Activated CD8-positive, alpha-beta memory T cell treated with anti-CD3 and anti-CD28 coated beads, Interleukin-2, amount 10 ng/mL, durations not matched to agents 7 days and 5 days (primary cell): ENCODE measurements at regions of chr17 and their contacts with region 1.

Region 1: DNA sequence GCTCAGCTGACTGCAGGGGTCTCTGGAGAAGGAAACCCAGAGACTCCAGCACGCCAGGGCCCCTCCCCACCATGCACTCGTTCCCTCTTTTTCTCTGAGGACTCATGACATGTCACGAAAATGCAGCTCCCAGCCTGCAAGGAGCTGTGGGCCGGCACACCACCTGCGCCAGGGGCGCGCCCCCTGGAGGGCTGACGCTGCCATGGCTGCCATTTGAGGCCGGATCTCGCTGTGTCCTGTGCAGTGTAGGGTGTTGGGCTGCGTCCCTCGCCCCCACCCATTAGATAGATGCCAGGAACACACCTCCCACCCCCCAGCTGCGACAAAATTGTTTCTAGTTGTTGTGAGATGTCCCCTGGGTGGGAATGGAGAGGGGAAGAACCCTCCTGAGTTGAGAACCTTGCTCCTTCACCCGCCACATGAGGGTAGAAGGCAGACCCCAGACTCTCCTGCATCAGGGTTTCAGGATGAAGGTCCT is 8.2 kb downstream of the SYNGR2 start:
- DNase-seq: peak; percentile 76
- ATAC-seq: peak; percentile 87
- H3K4me3 Mint-ChIP-seq: no peak overlapping the region
- H3K27ac Mint-ChIP-seq: no peak overlapping the region
- H3K4me1 Mint-ChIP-seq: peaks cover 69% of the 10 kb centered on the region
- H3K27me3 Mint-ChIP-seq: no peaks in the 10 kb centered on the region

Region 2: DNA sequence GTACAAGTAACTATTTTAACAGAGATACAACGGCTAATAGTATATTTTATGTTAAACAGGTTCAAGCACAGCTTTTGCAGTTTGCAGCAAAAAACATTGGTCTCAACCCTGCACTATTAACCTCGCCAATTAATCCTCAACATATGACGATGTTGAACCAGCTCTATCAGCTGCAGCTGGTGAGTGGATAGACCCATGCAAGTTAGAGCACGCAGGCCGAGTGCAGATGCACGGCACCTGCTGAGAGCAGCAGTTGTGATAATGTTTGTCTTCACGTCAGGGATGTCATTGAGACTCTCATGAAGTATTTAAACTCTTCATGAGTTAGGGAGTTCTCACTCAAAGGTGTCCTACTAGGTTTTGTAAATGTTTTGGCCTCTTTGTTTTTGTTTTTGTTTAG is 93.6 kb before region 1 on chr17:
- CTCF ChIA-PET with region 1: interaction called, 27 read pairs
- DNase-seq: no peak
- ATAC-seq: no peak
- H3K4me3 Mint-ChIP-seq: no peak overlapping the region
- H3K27ac Mint-ChIP-seq: no peak overlapping the region
- H3K4me1 Mint-ChIP-seq: peaks cover 12% of the 10 kb centered on the region
- H3K27me3 Mint-ChIP-seq: no peaks in the 10 kb centered on the region

Region 3: GRCh38 chr17:78112518-78113226 is 63.9 kb before region 1 on chr17:
- CTCF ChIA-PET with region 1: interaction called, 32 read pairs
- DNase-seq: peak; percentile 83
- ATAC-seq: peak; percentile 64
- H3K4me3 Mint-ChIP-seq: no peak overlapping the region
- H3K27ac Mint-ChIP-seq: peak overlapping the region; percentile 86
- H3K4me1 Mint-ChIP-seq: peaks cover 34% of the 10 kb centered on the region
- H3K27me3 Mint-ChIP-seq: no peaks in the 10 kb centered on the region

Region 4: GRCh38 chr17:78128551-78129350 is 47.8 kb before region 1 on chr17 and contains the start of gene TMC6:
- CTCF ChIA-PET with region 1: interaction called, 75 read pairs
- DNase-seq: peak; percentile 80
- ATAC-seq: peak; percentile 17
- H3K4me3 Mint-ChIP-seq: peak within 1 kb of the TSS; percentile 88
- H3K27ac Mint-ChIP-seq: peak within 1 kb of the TSS; percentile 99
- H3K4me1 Mint-ChIP-seq: peaks cover 48% of the 10 kb centered on the region
- H3K27me3 Mint-ChIP-seq: no peaks in the 10 kb centered on the region
- total RNA-seq, gene TMC6: 347 to 431 TPM

Region 5: GRCh38 chr17:78140169-78140976 is 36.2 kb before region 1 on chr17:
- CTCF ChIA-PET with region 1: interaction called, 75 read pairs
- DNase-seq: peak; percentile 99
- ATAC-seq: peak; percentile 93
- H3K4me3 Mint-ChIP-seq: no peak overlapping the region
- H3K27ac Mint-ChIP-seq: peak overlapping the region; percentile 75
- H3K4me1 Mint-ChIP-seq: peaks cover 50% of the 10 kb centered on the region
- H3K27me3 Mint-ChIP-seq: no peaks in the 10 kb centered on the region

Region 6: GRCh38 chr17:78186692-78187595 is 10.4 kb after region 1 on chr17 and contains the starts of genes AFMID and TK1:
- CTCF ChIA-PET with region 1: interaction called, 31 read pairs
- DNase-seq: peak; percentile 97
- ATAC-seq: peak; percentile 95
- H3K4me3 Mint-ChIP-seq: peak within 1 kb of the TSS; percentile 81
- H3K27ac Mint-ChIP-seq: peak within 1 kb of the TSS; percentile 78
- H3K4me1 Mint-ChIP-seq: peaks cover 43% of the 10 kb centered on the region
- H3K27me3 Mint-ChIP-seq: no peaks in the 10 kb centered on the region
- total RNA-seq, gene AFMID: 17.1 to 24.2 TPM
- total RNA-seq, gene TK1: 145 to 164 TPM